ENCODE measurements at regions of chr9 and their contacts with region 1.

Region 1: GRCh38 chr9:14212077-14212476 is 101.9 kb downstream of the NFIB start:
- DNase-seq: no peak
- H3K4me3 ChIP-seq: no peak overlapping the region
- H3K27ac ChIP-seq: no peak overlapping the region
- H3K4me1 ChIP-seq: no peaks in the 10 kb centered on the region
- CTCF ChIP-seq: no peak

Region 2: DNA sequence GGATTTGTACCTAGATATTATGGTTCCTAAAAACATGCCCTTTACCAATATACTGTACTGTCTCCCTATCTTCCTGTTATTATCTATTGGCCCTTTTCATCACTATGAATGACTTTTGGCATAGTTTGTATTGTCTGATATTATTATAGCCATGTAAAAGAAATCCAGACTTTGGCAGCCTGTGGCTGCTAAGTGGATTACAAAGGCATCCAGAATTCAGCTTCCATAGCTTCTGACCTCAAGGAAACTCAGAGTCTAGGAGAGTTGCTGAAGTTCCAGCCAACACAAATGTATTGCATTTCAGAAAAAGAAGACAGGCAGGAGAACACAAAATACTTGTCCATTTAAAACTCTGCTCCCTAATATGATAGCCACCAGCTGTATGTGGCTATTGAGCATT is 613.3 kb before region 1 on chr9:
- CTCF ChIA-PET with region 1: no interaction called
- POLR2A ChIA-PET with region 1: no interaction called
- intact Hi-C with region 1: loop called (anchors 5 kb)
- DNase-seq: no peak
- H3K4me3 ChIP-seq: no peak overlapping the region
- H3K27ac ChIP-seq: no peak overlapping the region
- H3K4me1 ChIP-seq: no peaks in the 10 kb centered on the region
- CTCF ChIP-seq: no peak

Region 3: GRCh38 chr9:14179449-14179848 is 32.6 kb before region 1 on chr9:
- CTCF ChIA-PET with region 1: no interaction called
- POLR2A ChIA-PET with region 1: interaction called, 5 read pairs
- intact Hi-C with region 1: loop called (anchors 1 kb)
- DNase-seq: no peak
- H3K4me3 ChIP-seq: no peak overlapping the region
- H3K27ac ChIP-seq: no peak overlapping the region
- H3K4me1 ChIP-seq: no peaks in the 10 kb centered on the region
- CTCF ChIP-seq: no peak

Region 4: GRCh38 chr9:15068261-15068660 is 856.2 kb after region 1 on chr9:
- CTCF ChIA-PET with region 1: no interaction called
- POLR2A ChIA-PET with region 1: no interaction called
- intact Hi-C with region 1: no loop called
- DNase-seq: no peak
- H3K4me3 ChIP-seq: no peak overlapping the region
- H3K27ac ChIP-seq: no peak overlapping the region
- H3K4me1 ChIP-seq: no peaks in the 10 kb centered on the region
- CTCF ChIP-seq: no peak